Esophagus squamous epithelium (tissue), 5 donors: ENCODE measurements at regions of chr6 and their contacts with region 1.

Region 1: GRCh38 chr6:105087571-105088211 is 92.1 kb downstream of the POPDC3 start:
- DNase-seq: no peak
- H3K4me3 ChIP-seq: no peak overlapping the region
- H3K27ac ChIP-seq: no peak overlapping the region
- H3K4me1 ChIP-seq: peaks cover 0 to 18% (median 0%) of the 10 kb centered on the region in 3 donors
- H3K27me3 ChIP-seq: no peaks in the 10 kb centered on the region
- CTCF ChIP-seq: peak; percentile 44 to 85 (median 76)
- POLR2A ChIP-seq: no peak

Region 2: DNA sequence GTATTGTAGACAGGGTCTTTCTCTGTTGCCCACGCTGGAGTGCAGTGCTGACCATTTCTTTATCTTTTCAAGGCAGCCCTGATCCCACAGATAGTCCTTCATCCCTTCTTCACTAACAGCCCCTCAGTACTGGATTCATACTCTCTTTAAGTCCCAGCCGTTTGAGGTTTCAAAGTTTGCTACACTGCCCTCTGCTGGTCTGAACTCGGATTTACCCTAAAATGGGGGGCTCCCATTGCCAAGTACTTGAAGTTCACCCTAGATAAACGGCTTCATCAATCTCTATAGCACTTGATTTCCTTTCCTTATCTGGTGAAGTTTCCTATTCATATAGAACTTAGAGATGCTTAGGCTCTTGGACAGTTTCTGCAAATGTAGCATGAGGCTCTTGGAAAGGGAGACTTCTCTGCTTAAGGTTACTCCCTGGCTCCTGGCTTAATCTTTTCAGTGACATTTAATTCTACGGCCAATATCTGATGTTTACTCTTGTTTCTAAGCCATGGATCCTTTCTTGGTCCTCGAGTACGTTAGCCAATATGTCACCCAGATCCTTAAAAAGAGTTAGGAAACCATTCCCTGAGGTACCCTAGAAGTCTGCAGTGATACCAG is 336.6 kb after region 1 on chr6:
- intact Hi-C with region 1: loop called (anchors 5 kb)
- DNase-seq: no peak
- H3K4me3 ChIP-seq: no peak overlapping the region
- H3K27ac ChIP-seq: no peak overlapping the region
- H3K4me1 ChIP-seq: peaks cover 0 to 11% (median 0%) of the 10 kb centered on the region in 3 donors
- H3K27me3 ChIP-seq: no peaks in the 10 kb centered on the region
- CTCF ChIP-seq: peak; percentile 17 to 69 (median 62)
- POLR2A ChIP-seq: no peak